Calu3 (cell line): ENCODE measurements at regions of chr6 and their contacts with region 1.

Region 1: GRCh38 chr6:80338201-80338836 is 231.8 kb downstream of the BCKDHB start:
- DNase-seq: peak; percentile 80
- H3K4me3 Mint-ChIP-seq: no peak overlapping the region
- H3K27ac Mint-ChIP-seq: no peak overlapping the region
- H3K4me1 Mint-ChIP-seq: no peaks in the 10 kb centered on the region
- H3K27me3 Mint-ChIP-seq: no peaks in the 10 kb centered on the region
- CTCF ChIP-seq: peak; percentile 88

Region 2: DNA sequence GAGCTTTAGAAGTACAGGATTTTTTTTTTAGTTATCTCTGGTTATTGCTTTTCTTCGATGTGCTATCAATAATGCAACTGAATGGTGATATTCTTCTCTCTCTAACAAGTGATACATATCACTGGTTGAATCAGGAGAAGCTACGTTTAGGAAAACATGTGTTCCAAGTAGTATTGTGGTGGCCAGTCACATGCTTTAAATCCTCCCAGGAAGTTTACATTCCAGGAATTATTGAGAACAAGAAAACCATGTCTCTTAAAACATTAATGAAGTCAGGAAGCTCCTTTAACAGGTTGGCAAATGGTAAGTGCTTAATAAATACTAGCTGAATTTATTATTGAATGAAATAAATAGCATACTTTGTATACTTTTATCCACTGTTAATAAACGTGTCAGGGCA is 139.3 kb after region 1 on chr6:
- CTCF ChIA-PET with region 1: no interaction called
- intact Hi-C with region 1: loop called (anchors 5 kb)
- DNase-seq: no peak
- H3K4me3 Mint-ChIP-seq: no peak overlapping the region
- H3K27ac Mint-ChIP-seq: no peak overlapping the region
- H3K4me1 Mint-ChIP-seq: peaks cover 8% of the 10 kb centered on the region
- H3K27me3 Mint-ChIP-seq: no peaks in the 10 kb centered on the region
- CTCF ChIP-seq: no peak

Region 3: DNA sequence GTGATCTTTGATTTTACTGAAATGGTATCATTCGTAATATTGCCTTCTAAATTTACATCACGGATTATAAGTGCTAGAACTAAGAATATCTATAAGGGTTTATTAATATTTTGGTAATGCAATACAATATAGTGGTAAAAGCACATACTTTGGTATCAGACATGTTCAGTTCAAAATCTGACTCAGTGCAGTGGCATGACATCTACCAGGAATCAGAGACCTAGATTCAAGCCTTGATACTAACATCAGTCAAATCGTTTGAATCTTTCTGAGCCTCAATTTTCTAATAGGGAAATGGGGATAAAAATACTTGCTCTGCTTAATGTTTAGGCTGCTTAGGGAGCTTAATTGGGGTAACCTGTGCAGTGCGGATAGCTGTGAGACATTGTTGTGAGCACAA is 256.1 kb after region 1 on chr6:
- CTCF ChIA-PET with region 1: no interaction called
- intact Hi-C with region 1: no loop called
- DNase-seq: no peak
- H3K4me3 Mint-ChIP-seq: no peak overlapping the region
- H3K27ac Mint-ChIP-seq: no peak overlapping the region
- H3K4me1 Mint-ChIP-seq: no peaks in the 10 kb centered on the region
- H3K27me3 Mint-ChIP-seq: no peaks in the 10 kb centered on the region
- CTCF ChIP-seq: no peak